ENCODE measurements at regions of chr12 and their contacts with region 1.

Region 1: DNA sequence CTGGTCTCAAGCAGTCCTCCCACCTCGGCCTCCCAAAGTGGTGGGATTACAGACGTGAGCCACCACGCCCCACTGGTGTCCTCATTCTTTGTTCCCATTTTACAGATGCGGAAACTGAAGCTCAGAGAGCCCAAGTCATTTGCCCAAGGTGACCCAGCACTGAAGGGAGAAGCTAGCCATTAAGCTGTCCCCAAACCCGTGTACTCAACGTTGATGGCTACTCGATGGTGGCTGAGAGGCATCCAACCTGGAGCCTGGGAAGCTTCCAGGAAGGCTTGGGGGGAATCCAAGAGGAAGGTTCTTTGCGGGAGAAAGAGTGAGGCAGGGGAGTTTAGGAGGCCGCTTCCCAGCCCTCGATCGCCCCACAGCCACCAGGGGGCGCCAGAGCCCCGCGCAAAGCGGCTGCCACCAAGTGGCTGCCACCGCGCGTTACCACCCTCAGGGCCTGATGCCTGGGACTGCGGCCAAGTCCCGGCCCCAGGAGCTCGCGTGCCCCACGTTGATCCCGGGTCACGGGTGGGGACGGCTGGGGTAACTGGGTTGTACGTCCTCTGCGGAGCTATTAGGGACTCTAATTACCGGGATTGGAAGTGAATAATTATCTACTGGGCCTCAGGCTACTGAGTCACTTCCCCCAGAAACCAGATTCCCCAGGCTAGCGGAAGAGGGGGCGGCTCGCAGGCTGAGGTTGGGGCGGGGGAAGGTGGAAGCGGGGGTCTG is 8.8 kb upstream of the SH2B3 start:
- DNase-seq: peak; percentile 73
- ATAC-seq: peak; percentile 92
- H3K4me3 ChIP-seq: peak overlapping the region; percentile 38
- H3K27ac ChIP-seq: peak overlapping the region; percentile 76
- H3K4me1 ChIP-seq: peaks cover 9% of the 10 kb centered on the region
- H3K27me3 ChIP-seq: no peaks in the 10 kb centered on the region
- CTCF ChIP-seq: peak; percentile 99
- POLR2A ChIP-seq: 0 out of 2 replicates have a peak, but pooled peaks have one; percentile 30
- RAD21 ChIP-seq: peak; percentile 97

Region 2: GRCh38 chr12:111434680-111435338 is 37.9 kb after region 1 on chr12:
- CTCF ChIA-PET with region 1: interaction called, 10 read pairs
- POLR2A ChIA-PET with region 1: no interaction called
- dilution Hi-C with region 1: no loop called
- in situ Hi-C with region 1: no loop called
- intact Hi-C with region 1: no loop called
- DNase-seq: peak; percentile 62
- ATAC-seq: peak; percentile 25
- H3K4me3 ChIP-seq: no peak overlapping the region
- H3K27ac ChIP-seq: peak overlapping the region; percentile 51
- H3K4me1 ChIP-seq: peaks cover 36% of the 10 kb centered on the region
- H3K27me3 ChIP-seq: no peaks in the 10 kb centered on the region
- CTCF ChIP-seq: no peak
- POLR2A ChIP-seq: no peak
- RAD21 ChIP-seq: no peak

Region 3: GRCh38 chr12:111444314-111444924 is 47.5 kb after region 1 on chr12:
- CTCF ChIA-PET with region 1: interaction called, 63 read pairs
- POLR2A ChIA-PET with region 1: no interaction called
- dilution Hi-C with region 1: no loop called
- in situ Hi-C with region 1: no loop called
- intact Hi-C with region 1: no loop called
- DNase-seq: no peak
- ATAC-seq: no peak
- H3K4me3 ChIP-seq: no peak overlapping the region
- H3K27ac ChIP-seq: no peak overlapping the region
- H3K4me1 ChIP-seq: peaks cover 16% of the 10 kb centered on the region
- H3K27me3 ChIP-seq: no peaks in the 10 kb centered on the region
- CTCF ChIP-seq: no peak
- POLR2A ChIP-seq: no peak
- RAD21 ChIP-seq: no peak

Region 4: DNA sequence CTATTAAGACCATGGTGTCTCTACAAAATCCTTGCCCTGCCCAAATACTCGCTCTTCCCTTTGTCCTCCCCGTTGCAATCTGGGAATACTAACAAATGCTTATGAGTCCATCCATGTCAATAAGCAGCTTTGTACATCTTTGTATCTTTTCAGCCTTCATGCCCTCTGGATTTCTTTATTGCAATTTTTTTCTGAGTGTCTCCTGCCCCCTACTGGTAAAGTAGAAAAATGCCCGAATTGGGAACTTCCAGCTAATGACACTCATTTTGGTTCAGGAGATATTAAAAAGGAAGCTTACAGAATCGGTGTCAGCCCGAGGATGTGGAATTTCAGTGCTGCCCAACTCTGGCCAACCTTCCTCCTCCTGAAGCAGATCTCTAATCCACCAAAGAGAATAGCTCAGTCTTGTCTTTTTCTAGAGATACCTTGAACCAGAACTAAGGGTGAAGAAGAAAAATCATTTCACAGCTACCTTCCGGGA is 54.8 kb after region 1 on chr12:
- CTCF ChIA-PET with region 1: interaction called, 63 read pairs
- POLR2A ChIA-PET with region 1: no interaction called
- dilution Hi-C with region 1: no loop called
- in situ Hi-C with region 1: no loop called
- intact Hi-C with region 1: loop called (anchors 1 kb)
- DNase-seq: peak; percentile 59
- ATAC-seq: peak; percentile 60
- H3K4me3 ChIP-seq: no peak overlapping the region
- H3K27ac ChIP-seq: no peak overlapping the region
- H3K4me1 ChIP-seq: peaks cover 7% of the 10 kb centered on the region
- H3K27me3 ChIP-seq: no peaks in the 10 kb centered on the region
- CTCF ChIP-seq: peak; percentile 77
- POLR2A ChIP-seq: no peak
- RAD21 ChIP-seq: peak; percentile 70

Region 5: GRCh38 chr12:111529424-111530368 is 132.8 kb after region 1 on chr12:
- CTCF ChIA-PET with region 1: interaction called, 10 read pairs
- POLR2A ChIA-PET with region 1: no interaction called
- dilution Hi-C with region 1: no loop called
- in situ Hi-C with region 1: no loop called
- intact Hi-C with region 1: loop called (anchors 1 kb)
- DNase-seq: peak; percentile 59
- ATAC-seq: peak; percentile 87
- H3K4me3 ChIP-seq: no peak overlapping the region
- H3K27ac ChIP-seq: no peak overlapping the region
- H3K4me1 ChIP-seq: no peaks in the 10 kb centered on the region
- H3K27me3 ChIP-seq: no peaks in the 10 kb centered on the region
- CTCF ChIP-seq: peak; percentile 59
- POLR2A ChIP-seq: no peak
- RAD21 ChIP-seq: peak; percentile 44

Region 6: GRCh38 chr12:111673503-111673902 is 276.6 kb after region 1 on chr12:
- CTCF ChIA-PET with region 1: interaction called, 16 read pairs
- POLR2A ChIA-PET with region 1: no interaction called
- dilution Hi-C with region 1: no loop called
- in situ Hi-C with region 1: no loop called
- intact Hi-C with region 1: loop called (anchors 5 kb)
- DNase-seq: peak; percentile 31
- ATAC-seq: peak; percentile 69
- H3K4me3 ChIP-seq: no peak overlapping the region
- H3K27ac ChIP-seq: no peak overlapping the region
- H3K4me1 ChIP-seq: no peaks in the 10 kb centered on the region
- H3K27me3 ChIP-seq: no peaks in the 10 kb centered on the region
- CTCF ChIP-seq: peak; percentile 56
- POLR2A ChIP-seq: no peak
- RAD21 ChIP-seq: peak; percentile 66

Measured in IMR-90 (cell line).